GM18951 (cell line): ENCODE measurements at regions of chr15 and their contacts with region 1.

Region 1: DNA sequence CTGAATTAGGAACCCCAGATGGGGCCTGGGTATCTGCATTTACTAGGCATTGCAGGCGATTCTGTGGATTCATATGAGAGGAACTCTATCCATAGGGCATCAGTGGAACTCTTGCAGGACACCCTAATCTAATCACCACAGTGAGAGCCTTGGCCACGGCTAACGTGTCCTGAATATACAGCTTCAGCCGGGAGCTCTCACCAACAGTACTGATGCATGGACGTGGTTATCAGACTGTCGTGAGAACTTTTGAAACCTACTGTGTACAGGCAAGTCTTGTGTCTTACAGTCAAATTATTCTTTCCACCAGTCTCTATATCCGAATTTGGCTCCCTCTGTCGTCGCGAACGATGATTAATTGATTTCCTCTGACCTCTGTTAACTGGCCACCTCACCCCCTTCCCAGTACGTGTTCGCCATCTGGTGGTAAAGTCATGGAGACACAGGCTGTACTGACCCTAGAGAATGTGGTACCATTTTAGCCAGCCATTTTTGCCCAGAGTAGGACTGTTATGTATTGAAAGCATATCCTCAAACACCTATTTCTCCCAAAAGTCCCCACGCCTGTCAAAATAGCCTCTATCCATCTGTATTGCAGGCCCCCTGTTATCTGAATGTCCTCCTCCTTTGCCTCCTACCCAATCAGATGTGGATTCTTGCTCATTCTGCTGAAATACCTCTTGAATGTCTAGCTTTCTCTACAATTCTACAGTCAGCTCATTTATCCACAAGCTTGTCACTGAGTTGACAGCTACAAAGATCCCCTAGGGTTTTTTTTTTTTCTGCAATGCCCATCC is 39.7 kb downstream of the GLDN start:
- POLR2A ChIP-seq: no peak

Region 2: GRCh38 chr15:50605462-50605861 is 775.7 kb before region 1 on chr15:
- in situ Hi-C with region 1: no loop called
- POLR2A ChIP-seq: no peak

Region 3: GRCh38 chr15:51162865-51163762 is 218.1 kb before region 1 on chr15:
- in situ Hi-C with region 1: loop called (anchors 10 kb)
- POLR2A ChIP-seq: no peak

Region 4: GRCh38 chr15:51299187-51300066 is 81.8 kb before region 1 on chr15:
- in situ Hi-C with region 1: loop called (anchors 10 kb)
- POLR2A ChIP-seq: no peak